Cardiac septum (tissue), 1 donor: ENCODE measurements at regions of chr6 and their contacts with region 1.

Region 1: GRCh38 chr6:163449076-163449475 is 34.6 kb downstream of the QKI start:
- DNase-seq: no peak

Region 2: GRCh38 chr6:163501026-163501425 is 52.0 kb after region 1 on chr6:
- intact Hi-C with region 1: loop called (anchors 5 kb)
- DNase-seq: no peak